ENCODE measurements at regions of chr16 and their contacts with region 1.

Region 1: DNA sequence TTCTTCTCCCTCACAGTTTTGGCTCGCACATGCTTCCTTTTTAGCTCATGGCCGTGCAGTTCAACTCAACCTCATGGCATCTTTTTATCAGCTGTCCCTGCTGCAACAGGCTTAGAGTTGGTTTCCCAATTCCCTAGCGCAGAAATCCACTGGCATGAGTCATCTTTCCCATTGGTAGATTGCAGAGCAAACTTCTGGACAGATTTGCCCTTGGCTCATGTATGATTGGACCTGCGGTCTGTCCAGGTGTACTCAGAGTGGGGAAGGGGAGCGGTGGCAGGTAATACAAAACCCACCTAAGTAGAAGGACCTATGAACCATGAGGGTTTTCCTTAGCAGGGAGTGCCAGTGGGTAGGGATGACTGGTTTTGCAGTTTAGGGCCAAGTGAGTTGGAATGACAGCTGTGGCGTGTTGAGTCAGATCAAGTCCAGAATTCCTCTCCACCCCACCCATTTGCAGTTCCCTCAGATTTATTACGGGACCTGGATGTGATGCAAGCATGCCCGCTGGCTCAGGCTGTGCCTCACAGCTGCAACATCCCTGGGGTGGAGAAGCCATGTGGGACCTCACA is 584.7 kb downstream of the WWOX start:
- DNase-seq: peak; percentile 53
- H3K4me3 ChIP-seq: no peak overlapping the region
- H3K27ac ChIP-seq: peak overlapping the region; percentile 95
- H3K4me1 ChIP-seq: peaks cover 25% of the 10 kb centered on the region
- H3K27me3 ChIP-seq: no peaks in the 10 kb centered on the region
- CTCF ChIP-seq: no peak

Region 2: DNA sequence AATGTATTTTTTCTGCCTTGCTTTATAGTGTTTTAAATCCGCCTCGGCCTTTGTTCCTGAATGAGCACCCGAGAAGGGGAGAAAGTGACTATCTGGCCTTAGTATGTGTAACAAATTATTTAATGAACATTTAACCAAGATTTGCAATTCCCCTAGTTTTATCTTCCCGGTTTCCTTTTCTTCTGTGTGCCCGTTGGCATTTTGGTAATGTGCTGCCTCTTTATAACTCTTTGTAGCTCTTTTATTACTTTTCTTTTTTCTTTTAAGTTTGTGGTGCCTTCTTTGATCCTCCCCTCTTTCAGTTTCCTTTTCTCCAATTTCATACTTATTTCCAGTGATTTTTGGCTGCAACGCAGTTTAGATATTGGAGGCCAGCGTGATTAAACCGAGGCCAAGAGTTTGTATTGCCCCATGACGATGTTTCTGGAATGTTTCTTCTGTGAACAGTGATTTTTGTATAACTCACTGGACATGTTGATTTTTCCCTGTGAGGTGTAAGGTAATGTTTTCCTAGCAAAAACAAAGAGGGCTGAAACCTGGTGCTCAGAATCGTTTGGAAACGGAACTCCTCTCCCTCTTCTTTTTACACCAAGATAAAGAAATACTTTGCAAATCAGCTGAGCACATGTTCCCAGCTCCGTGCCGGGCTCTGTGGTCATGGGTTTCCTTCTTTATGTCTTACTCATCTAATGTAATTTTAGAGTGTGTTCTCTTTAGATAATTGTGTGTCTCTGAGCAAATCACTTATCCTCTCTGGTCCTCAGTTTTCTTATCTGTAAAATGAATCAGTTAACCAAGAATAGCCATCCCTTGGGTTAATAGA is 240.4 kb before region 1 on chr16:
- CTCF ChIA-PET with region 1: no interaction called
- dilution Hi-C with region 1: no loop called
- in situ Hi-C with region 1: no loop called
- intact Hi-C with region 1: no loop called
- DNase-seq: no peak
- H3K4me3 ChIP-seq: no peak overlapping the region
- H3K27ac ChIP-seq: no peak overlapping the region
- H3K4me1 ChIP-seq: no peaks in the 10 kb centered on the region
- H3K27me3 ChIP-seq: no peaks in the 10 kb centered on the region
- CTCF ChIP-seq: no peak

Region 3: DNA sequence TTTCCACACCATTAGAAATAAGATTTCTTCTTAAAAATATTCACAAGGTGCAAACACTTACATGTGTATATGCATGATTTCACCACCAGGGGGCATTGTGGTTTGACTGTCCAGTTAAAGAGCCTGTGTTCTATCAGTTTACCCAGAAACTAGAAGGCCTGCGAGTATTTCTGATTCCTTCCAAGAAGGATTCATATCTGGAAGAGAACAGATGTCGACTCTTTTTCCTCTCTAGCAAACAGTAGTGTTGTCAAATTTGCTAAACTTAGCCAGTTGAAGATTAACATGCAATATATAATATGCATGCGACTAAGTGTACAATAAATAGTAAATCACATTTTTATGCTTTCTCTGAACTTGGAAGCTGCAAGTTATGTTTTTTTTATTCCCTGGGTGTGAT is 180.5 kb before region 1 on chr16:
- CTCF ChIA-PET with region 1: no interaction called
- dilution Hi-C with region 1: no loop called
- in situ Hi-C with region 1: no loop called
- intact Hi-C with region 1: loop called (anchors 10 kb)
- DNase-seq: no peak
- H3K4me3 ChIP-seq: no peak overlapping the region
- H3K27ac ChIP-seq: no peak overlapping the region
- H3K4me1 ChIP-seq: peaks cover 9% of the 10 kb centered on the region
- H3K27me3 ChIP-seq: no peaks in the 10 kb centered on the region
- CTCF ChIP-seq: peak; percentile 69 to 78

Region 4: DNA sequence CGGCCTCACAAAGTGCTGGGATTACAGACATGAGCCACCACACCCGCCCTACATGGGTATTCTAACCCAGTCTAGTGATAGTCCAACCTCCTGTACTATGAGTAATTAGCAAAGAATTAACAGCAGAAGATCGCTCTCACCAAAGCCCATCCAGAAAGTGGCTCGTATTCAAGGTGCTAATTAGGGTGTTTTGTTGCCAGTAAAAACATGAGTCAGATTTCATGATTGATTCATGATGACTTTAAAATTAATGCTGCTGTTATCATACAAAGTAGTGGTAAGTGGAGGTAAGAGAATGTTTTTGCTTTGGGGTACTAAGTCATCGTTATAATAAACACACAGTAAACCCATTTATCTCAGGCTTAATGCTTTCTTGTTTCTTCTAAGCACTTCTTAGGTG is 155.9 kb before region 1 on chr16:
- CTCF ChIA-PET with region 1: no interaction called
- dilution Hi-C with region 1: no loop called
- in situ Hi-C with region 1: loop called in 1 of 2 experiments (anchors 5 kb)
- intact Hi-C with region 1: no loop called
- DNase-seq: no peak
- H3K4me3 ChIP-seq: no peak overlapping the region
- H3K27ac ChIP-seq: peak overlapping the region; percentile 12
- H3K4me1 ChIP-seq: no peaks in the 10 kb centered on the region
- H3K27me3 ChIP-seq: no peaks in the 10 kb centered on the region
- CTCF ChIP-seq: no peak

Region 5: GRCh38 chr16:78628461-78629045 is 55.6 kb before region 1 on chr16:
- CTCF ChIA-PET with region 1: no interaction called
- dilution Hi-C with region 1: no loop called
- in situ Hi-C with region 1: no loop called
- intact Hi-C with region 1: no loop called
- DNase-seq: no peak
- H3K4me3 ChIP-seq: no peak overlapping the region
- H3K27ac ChIP-seq: no peak overlapping the region
- H3K4me1 ChIP-seq: no peaks in the 10 kb centered on the region
- H3K27me3 ChIP-seq: no peaks in the 10 kb centered on the region
- CTCF ChIP-seq: no peak

Region 6: DNA sequence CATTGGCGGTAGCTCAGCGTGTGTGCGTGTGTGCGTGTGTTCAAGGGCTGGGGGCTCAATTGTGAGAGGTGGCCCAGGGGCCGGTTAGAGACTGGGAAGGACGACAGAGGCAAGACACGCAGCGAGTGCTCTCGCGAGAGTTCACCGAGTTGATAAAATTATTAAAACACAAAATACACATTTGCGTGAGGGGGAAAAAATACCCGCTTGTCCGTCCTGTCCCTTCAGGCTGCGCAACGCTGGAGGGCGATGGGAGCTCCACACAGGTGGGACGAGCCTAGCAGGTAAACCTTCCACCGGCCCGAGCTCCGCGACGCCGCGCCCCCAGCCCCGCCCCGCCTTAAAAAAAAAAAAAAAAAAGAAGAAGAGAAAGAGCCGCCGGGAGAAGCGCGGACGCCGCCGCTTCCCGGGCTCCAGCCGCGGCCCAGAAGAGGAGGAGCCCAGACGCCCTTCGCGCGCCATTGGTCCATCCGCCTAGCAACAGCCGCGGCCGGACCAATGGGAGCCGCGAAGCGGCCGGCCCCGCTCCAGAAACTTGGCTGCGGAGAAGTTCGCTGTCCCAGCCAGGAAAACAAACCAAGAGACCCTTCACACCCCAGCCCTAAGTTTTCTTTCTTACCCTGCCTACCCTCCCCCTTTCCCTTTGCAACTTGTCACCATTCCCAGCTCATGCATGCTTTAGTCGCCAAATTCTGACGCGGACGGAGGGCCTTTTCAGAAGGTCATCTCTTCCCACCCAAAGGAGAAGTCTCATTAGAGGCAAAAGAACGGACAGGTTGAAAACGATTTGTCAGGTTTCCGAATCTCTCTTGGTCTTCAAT is 1086.3 kb after region 1 on chr16:
- CTCF ChIA-PET with region 1: no interaction called
- dilution Hi-C with region 1: no loop called
- in situ Hi-C with region 1: loop called in 1 of 2 experiments (anchors 25 kb)
- intact Hi-C with region 1: no loop called
- DNase-seq: peak; percentile 88
- H3K4me3 ChIP-seq: peak overlapping the region; percentile 59 to 62 (median 61)
- H3K27ac ChIP-seq: peak overlapping the region; percentile 30
- H3K4me1 ChIP-seq: peaks cover 28% of the 10 kb centered on the region
- H3K27me3 ChIP-seq: no peaks in the 10 kb centered on the region
- CTCF ChIP-seq: peak in 1 of 2 donors; percentile 18

Measured in mammary epithelial cell (primary cell).